ENCODE measurements at regions of chr4 and their contacts with region 1.

Region 1: DNA sequence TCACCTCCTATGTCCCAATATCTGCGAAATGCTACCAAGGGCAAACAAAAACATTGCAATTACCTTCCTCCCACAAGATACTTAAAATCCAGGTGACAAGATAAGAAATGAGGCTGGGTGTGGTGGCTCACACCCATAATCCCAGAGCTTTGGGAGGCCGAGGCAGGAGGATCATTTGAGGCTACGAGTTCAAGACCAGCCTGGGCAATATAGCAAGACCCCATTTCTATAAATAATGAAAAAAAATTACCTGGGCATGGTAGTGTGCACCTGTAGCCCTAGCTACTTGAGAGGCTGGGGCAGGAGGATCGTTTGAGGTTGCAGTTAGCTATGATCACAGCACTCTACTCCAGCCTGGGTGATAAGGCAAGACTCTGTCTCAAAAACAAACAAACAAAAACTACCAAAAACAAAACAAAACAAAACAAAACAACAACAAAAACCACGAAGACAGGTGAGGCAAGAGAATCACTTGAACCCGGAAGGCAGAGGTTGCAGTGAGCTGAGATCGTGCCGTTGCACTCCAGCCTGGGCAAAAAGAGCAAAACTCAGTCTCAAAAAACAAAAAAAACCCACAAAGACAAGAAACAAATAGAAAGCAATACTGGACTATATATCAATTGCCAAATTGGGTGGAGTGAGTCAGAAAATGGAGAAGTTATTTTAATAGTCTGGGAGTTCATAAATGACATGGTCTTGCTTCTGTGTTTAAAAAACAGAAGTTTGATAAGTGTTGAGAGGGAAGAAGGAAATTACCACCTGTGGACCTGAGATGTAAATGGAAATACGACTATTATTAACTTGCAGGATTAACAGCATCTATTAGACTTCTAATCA is 176.5 kb downstream of the FBXW7 start:
- DNase-seq: no peak
- ATAC-seq: no peak
- H3K4me3 ChIP-seq: no peak overlapping the region
- H3K4me3 Mint-ChIP-seq: no peak overlapping the region
- H3K27ac ChIP-seq: no peak overlapping the region
- H3K27ac Mint-ChIP-seq: no peak overlapping the region
- H3K4me1 ChIP-seq: no peaks in the 10 kb centered on the region
- H3K4me1 Mint-ChIP-seq: peaks cover 2% of the 10 kb centered on the region
- H3K27me3 ChIP-seq: no peaks in the 10 kb centered on the region
- H3K27me3 Mint-ChIP-seq: no peaks in the 10 kb centered on the region
- CTCF ChIP-seq: no peak

Region 2: DNA sequence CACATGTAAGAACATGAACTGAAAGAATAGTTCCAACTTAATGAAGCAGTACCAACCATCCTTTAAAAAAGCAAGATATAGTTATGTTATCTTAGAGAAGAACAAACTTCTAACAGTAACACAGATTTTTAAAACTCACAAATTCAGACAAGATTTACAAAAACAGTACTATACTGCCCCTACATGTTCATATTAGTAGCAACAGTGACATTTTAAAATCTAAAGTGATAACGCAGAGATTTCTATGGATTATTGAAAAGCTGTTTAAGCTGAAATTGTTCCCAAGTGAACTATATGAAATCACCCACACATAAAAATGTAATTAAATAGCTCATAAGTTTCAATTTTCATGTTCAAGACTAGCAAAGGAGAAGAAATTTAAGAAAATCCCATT is 10.5 kb after region 1 on chr4:
- CTCF ChIA-PET with region 1: interaction called, 3 read pairs
- POLR2A ChIA-PET with region 1: no interaction called
- intact Hi-C with region 1: loop called in 1 of 2 experiments (anchors 2 kb)
- DNase-seq: peak in 1 of 9 experiments; percentile 26
- ATAC-seq: no peak
- H3K4me3 ChIP-seq: no peak overlapping the region
- H3K4me3 Mint-ChIP-seq: no peak overlapping the region
- H3K27ac ChIP-seq: no peak overlapping the region
- H3K27ac Mint-ChIP-seq: no peak overlapping the region
- H3K4me1 ChIP-seq: no peaks in the 10 kb centered on the region
- H3K4me1 Mint-ChIP-seq: peaks cover 13% of the 10 kb centered on the region
- H3K27me3 ChIP-seq: no peaks in the 10 kb centered on the region
- H3K27me3 Mint-ChIP-seq: no peaks in the 10 kb centered on the region
- CTCF ChIP-seq: peak; percentile 53

Region 3: DNA sequence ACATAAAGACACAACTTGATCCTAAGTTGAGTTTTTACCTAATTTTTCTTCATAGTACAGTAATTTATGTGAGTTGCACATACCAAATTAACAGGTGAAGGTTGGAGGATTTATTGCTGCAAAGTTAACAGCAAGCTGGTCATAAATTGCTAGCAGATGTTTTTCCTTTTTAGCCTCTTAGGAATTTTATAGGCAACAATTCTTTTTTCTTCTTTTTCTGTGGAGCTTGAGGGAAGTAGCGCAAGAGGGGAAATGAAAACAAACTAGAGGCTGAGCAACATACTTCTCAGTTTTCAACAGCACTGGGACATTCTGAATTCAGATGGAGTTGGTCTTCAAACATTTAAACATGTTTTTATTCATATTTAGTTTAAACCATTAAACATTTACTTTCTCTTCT is 1260.9 kb after region 1 on chr4:
- CTCF ChIA-PET with region 1: no interaction called
- POLR2A ChIA-PET with region 1: no interaction called
- intact Hi-C with region 1: no loop called
- DNase-seq: no peak
- ATAC-seq: no peak
- H3K4me3 ChIP-seq: no peak overlapping the region
- H3K4me3 Mint-ChIP-seq: no peak overlapping the region
- H3K27ac ChIP-seq: no peak overlapping the region
- H3K27ac Mint-ChIP-seq: peak overlapping the region; percentile 7
- H3K4me1 ChIP-seq: no peaks in the 10 kb centered on the region
- H3K4me1 Mint-ChIP-seq: peaks cover 17% of the 10 kb centered on the region
- H3K27me3 ChIP-seq: no peaks in the 10 kb centered on the region
- H3K27me3 Mint-ChIP-seq: no peaks in the 10 kb centered on the region
- CTCF ChIP-seq: no peak

Measured in CD8-positive, alpha-beta T cell (primary cell).